Posterior cingulate gyrus (tissue), 11 donors: ENCODE measurements at regions of chr9 and their contacts with region 1.

Region 1: DNA sequence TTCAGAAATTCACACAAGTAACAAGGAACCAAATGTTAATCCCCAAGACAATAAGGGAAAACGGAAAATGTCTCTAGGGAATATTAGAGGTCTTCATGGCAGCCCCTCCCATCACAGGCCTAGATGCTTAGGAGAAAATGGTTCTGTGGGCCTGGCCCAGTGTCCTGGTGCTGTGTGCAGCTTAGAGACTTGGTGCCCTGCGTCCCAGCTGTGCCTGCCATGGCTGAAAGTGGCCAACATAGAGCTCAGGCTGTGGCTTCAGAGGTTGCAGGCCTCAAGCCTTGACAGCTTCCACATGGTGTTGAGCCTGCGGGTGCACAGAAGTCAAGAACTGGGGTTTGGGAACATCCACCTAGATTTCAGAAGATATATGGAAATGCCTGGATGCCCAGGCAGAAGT is 942.3 kb downstream of the PTPRD start:
- DNase-seq: no peak

Region 2: GRCh38 chr9:9645006-9645405 is 25.4 kb before region 1 on chr9:
- intact Hi-C with region 1: loop called (anchors 1 kb)
- DNase-seq: no peak